ENCODE measurements at regions of chr2 and their contacts with region 1.

Region 1: DNA sequence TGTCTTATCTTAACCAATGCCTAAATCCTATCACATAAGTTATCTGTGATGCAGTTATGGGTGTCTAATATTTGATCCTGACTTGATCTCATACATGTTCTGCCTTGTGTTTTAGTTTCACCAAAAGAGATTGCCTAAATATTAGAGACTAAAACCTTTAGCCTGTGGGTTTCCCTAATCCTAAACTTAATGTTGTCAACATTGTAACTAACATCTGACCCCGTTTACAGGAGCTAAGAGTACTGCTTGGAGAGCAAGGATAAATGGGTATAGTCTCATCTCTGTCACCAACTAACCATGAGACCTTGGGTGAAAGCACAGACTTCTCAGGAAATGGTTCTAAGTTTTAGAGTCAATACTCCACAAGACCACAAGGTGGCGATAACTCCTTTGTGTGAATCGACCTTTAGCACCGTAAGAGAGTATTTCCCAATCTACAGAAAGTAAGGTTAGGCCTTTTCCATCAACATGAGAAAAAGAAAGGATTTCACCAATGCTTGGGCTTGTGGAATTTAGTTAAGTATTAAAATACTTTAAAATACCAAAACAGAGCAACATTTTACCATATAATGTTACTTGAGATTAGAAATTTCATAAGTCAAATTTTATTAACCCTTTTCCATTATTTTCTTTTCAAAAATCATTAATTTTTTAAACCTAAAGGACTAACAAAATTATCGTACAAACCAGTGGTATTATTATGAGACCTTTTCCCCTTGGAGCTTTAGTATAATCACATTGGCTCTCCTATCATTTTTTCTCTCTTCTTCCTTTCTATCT is 60.5 kb downstream of the G6PC2 start:
- DNase-seq: peak; percentile 79
- ATAC-seq: peak; percentile 98
- H3K4me3 ChIP-seq: no peak overlapping the region
- H3K27ac ChIP-seq: no peak overlapping the region
- H3K4me1 ChIP-seq: 0 out of 4 replicates have a peak, but pooled peaks cover 0 to 2% of the 10 kb centered on the region in 2 experiments
- H3K27me3 ChIP-seq: no peaks in the 10 kb centered on the region
- CTCF ChIP-seq: peak; percentile 69 to 89 (median 81)
- POLR2A ChIP-seq: no peak
- RAD21 ChIP-seq: peak; percentile 86

Region 2: GRCh38 chr2:169131587-169132512 is 170.2 kb after region 1 on chr2:
- CTCF ChIA-PET with region 1: interaction called, 18 read pairs
- POLR2A ChIA-PET with region 1: no interaction called
- RAD21 ChIA-PET with region 1: no interaction called
- intact Hi-C with region 1: loop called (anchors 1 kb)
- DNase-seq: peak; percentile 77
- ATAC-seq: peak; percentile 98
- H3K4me3 ChIP-seq: no peak overlapping the region
- H3K27ac ChIP-seq: no peak overlapping the region
- H3K4me1 ChIP-seq: 0 out of 4 replicates have a peak, but pooled peaks cover 0 to 2% of the 10 kb centered on the region in 2 experiments
- H3K27me3 ChIP-seq: no peaks in the 10 kb centered on the region
- CTCF ChIP-seq: peak; percentile 69 to 98 (median 79)
- POLR2A ChIP-seq: no peak
- RAD21 ChIP-seq: peak; percentile 68

Measured in HCT116 (cell line).